ENCODE measurements at regions of chr2 and their contacts with region 1.

Region 1: DNA sequence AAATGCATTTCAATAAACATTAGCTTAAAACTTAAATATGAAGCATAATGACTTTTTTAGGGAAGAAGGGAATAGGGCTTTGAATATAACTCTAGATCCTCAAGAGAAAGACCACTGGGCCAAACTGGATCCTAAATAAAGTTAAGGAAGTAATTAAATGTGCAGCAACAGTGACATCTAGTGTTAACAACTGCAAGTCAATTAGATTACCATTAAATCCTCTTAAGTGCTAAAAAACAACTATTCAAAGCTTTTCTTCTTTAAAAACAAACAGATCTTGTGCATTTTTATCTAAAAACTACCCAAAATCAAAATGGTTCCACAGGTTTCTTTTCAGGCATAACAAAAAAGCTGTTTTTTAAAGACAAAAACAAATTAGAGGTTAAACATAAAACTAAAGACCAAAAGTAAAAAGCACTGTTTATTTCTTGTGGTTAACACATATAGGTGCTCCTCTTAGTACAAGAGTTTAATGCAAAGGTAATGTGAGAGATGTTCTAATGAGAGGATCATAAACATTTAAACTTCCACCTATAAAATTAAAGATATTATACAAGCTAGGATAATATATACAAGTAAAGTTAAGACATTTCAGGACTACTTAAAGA is 111.4 kb downstream of the THADA start:
- DNase-seq: peak; percentile 50
- H3K4me3 ChIP-seq: no peak overlapping the region
- H3K27ac ChIP-seq: no peak overlapping the region
- H3K4me1 ChIP-seq: peaks cover 9% of the 10 kb centered on the region
- H3K27me3 ChIP-seq: no peaks in the 10 kb centered on the region
- CTCF ChIP-seq: peak; percentile 45 to 51

Region 2: DNA sequence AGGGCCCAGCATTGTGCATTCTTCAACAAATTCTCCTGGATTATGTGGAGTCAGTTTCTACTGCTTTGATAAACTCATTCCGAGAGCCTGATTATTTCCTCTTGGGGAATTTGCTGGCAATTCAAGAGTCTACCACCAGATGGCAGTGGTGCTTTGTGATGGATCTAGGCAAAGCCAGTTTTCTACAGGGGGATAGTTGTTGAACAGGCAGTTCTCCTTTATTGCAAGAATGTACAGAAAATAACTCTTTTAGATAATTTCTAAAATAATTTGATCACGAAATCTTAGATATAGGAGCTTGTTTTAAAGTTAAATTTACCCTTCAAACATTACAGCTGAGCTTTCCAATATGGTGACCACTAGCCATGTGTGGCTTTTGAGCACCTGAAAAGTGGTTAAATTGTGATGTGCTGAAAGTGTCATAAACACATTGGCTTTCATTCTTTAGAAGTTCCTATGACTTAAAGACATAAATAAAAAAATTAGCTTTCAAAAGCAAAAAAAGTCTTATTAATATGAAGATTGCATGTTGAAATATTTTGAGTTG is 625.3 kb before region 1 on chr2:
- CTCF ChIA-PET with region 1: no interaction called
- dilution Hi-C with region 1: no loop called
- in situ Hi-C with region 1: no loop called
- intact Hi-C with region 1: loop called (anchors 1 kb)
- DNase-seq: peak; percentile 63
- H3K4me3 ChIP-seq: no peak overlapping the region
- H3K27ac ChIP-seq: no peak overlapping the region
- H3K4me1 ChIP-seq: peaks cover 35% of the 10 kb centered on the region
- H3K27me3 ChIP-seq: no peaks in the 10 kb centered on the region
- CTCF ChIP-seq: peak; percentile 93 to 95

Region 3: DNA sequence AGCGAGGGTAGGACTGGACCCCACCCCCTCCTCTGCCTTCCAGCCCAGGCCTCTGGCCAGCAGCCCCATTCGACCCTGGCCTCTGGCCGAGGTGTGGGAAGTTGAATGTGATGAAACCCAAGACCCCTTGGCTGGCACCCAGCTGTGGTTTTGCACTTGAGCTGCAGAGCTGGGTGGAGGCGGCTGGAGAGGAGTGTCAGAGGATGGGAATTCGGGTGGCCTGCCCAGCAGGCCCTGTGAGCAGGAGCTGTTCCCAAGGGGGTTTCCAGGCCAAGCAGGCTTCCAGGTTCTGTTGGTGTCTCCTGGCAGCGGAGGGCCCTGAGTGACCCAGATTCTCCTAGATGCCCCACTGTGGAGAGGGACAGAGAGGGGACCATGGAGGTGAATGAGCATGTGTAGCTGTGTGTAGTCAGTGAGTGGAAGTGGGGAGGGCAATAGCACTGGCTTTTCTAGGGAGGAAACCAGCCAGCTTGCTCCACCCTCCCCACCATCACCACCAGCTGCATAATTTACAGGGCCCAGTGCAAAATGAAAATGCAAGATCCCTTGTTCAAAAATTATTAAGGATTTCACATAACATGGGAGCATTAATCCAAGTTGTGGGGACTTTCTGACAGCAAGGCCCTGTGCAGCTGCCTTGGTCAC is 519.9 kb before region 1 on chr2:
- CTCF ChIA-PET with region 1: no interaction called
- dilution Hi-C with region 1: no loop called
- in situ Hi-C with region 1: loop called in 1 of 2 experiments (anchors 10 kb)
- intact Hi-C with region 1: no loop called
- DNase-seq: peak; percentile 85
- H3K4me3 ChIP-seq: no peak overlapping the region
- H3K27ac ChIP-seq: peak overlapping the region; percentile 25
- H3K4me1 ChIP-seq: peaks cover 16% of the 10 kb centered on the region
- H3K27me3 ChIP-seq: no peaks in the 10 kb centered on the region
- CTCF ChIP-seq: no peak

Region 4: GRCh38 chr2:43226558-43226954 is 257.9 kb before region 1 on chr2 and contains the start of gene ZFP36L2:
- CTCF ChIA-PET with region 1: no interaction called
- dilution Hi-C with region 1: no loop called
- in situ Hi-C with region 1: loop called (anchors 5 kb)
- intact Hi-C with region 1: loop called (anchors 1 kb)
- DNase-seq: peak; percentile 95
- H3K4me3 ChIP-seq: peak within 1 kb of the TSS; percentile 83 to 88 (median 86)
- H3K27ac ChIP-seq: peak within 1 kb of the TSS; percentile 88
- H3K4me1 ChIP-seq: peaks cover 29% of the 10 kb centered on the region
- H3K27me3 ChIP-seq: no peaks in the 10 kb centered on the region
- CTCF ChIP-seq: no peak
- total RNA-seq, gene ZFP36L2: 26.3 to 213 TPM

Region 5: DNA sequence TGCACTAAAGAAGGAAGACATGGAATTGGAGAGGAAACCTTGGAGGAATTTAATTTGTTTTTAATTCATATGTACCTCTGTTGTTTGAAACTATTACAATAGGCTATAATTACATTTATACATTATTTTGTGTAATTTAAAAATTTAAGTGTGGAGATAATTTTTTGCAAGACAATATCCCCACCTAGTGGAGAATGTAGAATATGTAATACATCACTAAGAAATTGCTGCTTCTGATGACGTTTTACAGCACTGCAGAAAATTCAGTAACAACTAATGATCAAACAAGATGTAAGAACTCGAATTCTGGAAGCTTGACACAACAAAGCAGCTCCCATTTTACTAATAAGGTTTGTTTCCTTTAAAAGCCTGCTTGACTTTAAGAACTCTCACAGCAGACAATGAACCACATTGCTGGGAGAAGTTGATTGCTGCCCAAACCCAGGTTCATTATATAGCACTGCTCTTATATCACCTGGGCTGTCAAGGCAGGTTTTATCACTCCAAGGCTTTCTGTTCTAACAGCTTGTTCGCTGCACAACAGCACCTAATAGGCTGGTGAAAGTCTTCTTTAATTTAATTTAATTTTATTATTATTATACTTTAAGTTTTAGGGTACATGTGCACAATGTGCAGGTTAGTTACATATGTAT is 58.0 kb after region 1 on chr2:
- CTCF ChIA-PET with region 1: interaction called, 3 read pairs
- dilution Hi-C with region 1: no loop called
- in situ Hi-C with region 1: no loop called
- intact Hi-C with region 1: loop called (anchors 5 kb)
- DNase-seq: peak; percentile 23
- H3K4me3 ChIP-seq: no peak overlapping the region
- H3K27ac ChIP-seq: no peak overlapping the region
- H3K4me1 ChIP-seq: peaks cover 30% of the 10 kb centered on the region
- H3K27me3 ChIP-seq: no peaks in the 10 kb centered on the region
- CTCF ChIP-seq: peak; percentile 40

Measured in mammary epithelial cell (primary cell).